Psoas muscle (tissue), 8 donors: ENCODE measurements at regions of chr5 and their contacts with region 1.

Region 1: GRCh38 chr5:159987031-159987674 is 21.8 kb upstream of the TTC1 start:
- DNase-seq: peak; percentile 73 to 86
- ATAC-seq: peak; percentile 93 to 98 (median 96)
- H3K4me3 ChIP-seq: peak overlapping the region; percentile 60
- H3K27ac ChIP-seq: no peak overlapping the region
- H3K4me1 ChIP-seq: no peaks in the 10 kb centered on the region
- H3K27me3 ChIP-seq: peaks cover 0 to 32% (median 8%) of the 10 kb centered on the region in 3 donors
- CTCF ChIP-seq: peak; percentile 70

Region 2: GRCh38 chr5:159286420-159287035 is 700.6 kb before region 1 on chr5:
- intact Hi-C with region 1: loop called in 1 of 2 experiments (anchors 5 kb)
- DNase-seq: no peak
- ATAC-seq: peak in 2 of 4 donors; percentile 50 to 59
- H3K4me3 ChIP-seq: no peak overlapping the region
- H3K27ac ChIP-seq: no peak overlapping the region
- H3K4me1 ChIP-seq: no peaks in the 10 kb centered on the region
- H3K27me3 ChIP-seq: no peaks in the 10 kb centered on the region
- CTCF ChIP-seq: peak; percentile 40

Region 3: DNA sequence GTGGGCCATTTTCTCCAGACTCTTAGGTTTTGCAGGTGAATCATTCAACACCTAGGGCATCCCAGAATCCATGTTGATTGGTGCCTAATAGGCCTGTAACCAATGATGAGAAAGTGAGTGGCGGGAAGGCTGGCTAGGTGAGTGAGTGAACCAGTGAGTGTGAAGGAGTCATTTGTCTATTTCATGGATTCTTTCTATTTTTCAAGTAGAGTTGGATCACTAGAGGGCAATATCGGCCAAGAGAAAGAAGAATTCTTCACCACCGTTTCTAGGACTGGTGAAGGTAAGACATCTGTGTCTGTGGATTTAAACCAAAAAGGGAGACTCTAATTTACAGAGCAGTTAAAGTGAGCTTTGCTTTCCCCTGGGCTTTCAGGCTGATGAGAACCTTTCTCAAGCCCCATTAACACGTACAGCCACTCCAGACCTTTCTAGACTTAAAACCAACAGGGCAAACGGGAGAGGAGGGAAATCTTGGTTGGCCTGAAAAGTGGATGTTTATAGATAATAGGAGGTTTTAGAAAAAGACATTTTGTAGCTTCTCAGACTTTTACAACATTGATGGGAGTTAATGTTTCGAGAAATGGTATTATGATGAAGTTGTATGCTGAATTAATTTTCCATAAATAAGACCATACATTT is 542.6 kb before region 1 on chr5:
- intact Hi-C with region 1: loop called (anchors 2 to 5 kb)
- DNase-seq: no peak
- ATAC-seq: no peak
- H3K4me3 ChIP-seq: no peak overlapping the region
- H3K27ac ChIP-seq: no peak overlapping the region
- H3K4me1 ChIP-seq: no peaks in the 10 kb centered on the region
- H3K27me3 ChIP-seq: no peaks in the 10 kb centered on the region
- CTCF ChIP-seq: no peak

Region 4: GRCh38 chr5:159515909-159516415 is 471.2 kb before region 1 on chr5:
- intact Hi-C with region 1: loop called (anchors 5 to 10 kb)
- DNase-seq: peak; percentile 68
- ATAC-seq: peak; percentile 74 to 90 (median 87)
- H3K4me3 ChIP-seq: no peak overlapping the region
- H3K27ac ChIP-seq: no peak overlapping the region
- H3K4me1 ChIP-seq: no peaks in the 10 kb centered on the region
- H3K27me3 ChIP-seq: no peaks in the 10 kb centered on the region
- CTCF ChIP-seq: peak; percentile 71